B cell (primary cell): ENCODE measurements at regions of chr19 and their contacts with region 1.

Region 1: GRCh38 chr19:47013041-47013517 is 6.6 kb upstream of the NPAS1 start:
- DNase-seq: peak; percentile 71
- ATAC-seq: peak; percentile 94
- H3K4me3 ChIP-seq: no peak overlapping the region
- H3K4me3 Mint-ChIP-seq: no peak overlapping the region
- H3K27ac ChIP-seq: no peak overlapping the region
- H3K27ac Mint-ChIP-seq: peak overlapping the region; percentile 41
- H3K4me1 ChIP-seq: peaks cover 0 to 5% of the 10 kb centered on the region in 2 donors
- H3K4me1 Mint-ChIP-seq: peaks cover 4% of the 10 kb centered on the region
- H3K27me3 ChIP-seq: peaks cover 0 to 16% (median 2%) of the 10 kb centered on the region in 4 experiments
- H3K27me3 Mint-ChIP-seq: peaks cover 13% of the 10 kb centered on the region
- CTCF ChIP-seq: peak; percentile 99

Region 2: GRCh38 chr19:46860125-46860845 is 152.8 kb before region 1 on chr19:
- CTCF ChIA-PET with region 1: interaction called, 13 read pairs
- POLR2A ChIA-PET with region 1: no interaction called
- intact Hi-C with region 1: no loop called
- DNase-seq: peak; percentile 97
- ATAC-seq: peak; percentile 81
- H3K4me3 ChIP-seq: peak overlapping the region in 4 of 5 experiments; percentile 68 to 79 (median 77)
- H3K4me3 Mint-ChIP-seq: peak overlapping the region; percentile 91
- H3K27ac ChIP-seq: peak overlapping the region; percentile 71 to 77
- H3K27ac Mint-ChIP-seq: peak overlapping the region; percentile 95
- H3K4me1 ChIP-seq: peaks cover 40 to 41% of the 10 kb centered on the region in 2 donors
- H3K4me1 Mint-ChIP-seq: peaks cover 22% of the 10 kb centered on the region
- H3K27me3 ChIP-seq: no peaks in the 10 kb centered on the region
- H3K27me3 Mint-ChIP-seq: no peaks in the 10 kb centered on the region
- CTCF ChIP-seq: no peak

Region 3: GRCh38 chr19:47035127-47036096 is 22.3 kb after region 1 on chr19:
- CTCF ChIA-PET with region 1: interaction called, 27 read pairs
- POLR2A ChIA-PET with region 1: no interaction called
- intact Hi-C with region 1: loop called (anchors 1 kb)
- DNase-seq: peak; percentile 97
- ATAC-seq: peak; percentile 98
- H3K4me3 ChIP-seq: peak overlapping the region; percentile 36 to 69 (median 56)
- H3K4me3 Mint-ChIP-seq: peak overlapping the region; percentile 93
- H3K27ac ChIP-seq: no peak overlapping the region
- H3K27ac Mint-ChIP-seq: peak overlapping the region; percentile 80
- H3K4me1 ChIP-seq: peaks cover 18 to 19% of the 10 kb centered on the region in 2 donors
- H3K4me1 Mint-ChIP-seq: peaks cover 20% of the 10 kb centered on the region
- H3K27me3 ChIP-seq: peaks cover 0 to 20% (median 1%) of the 10 kb centered on the region in 4 experiments
- H3K27me3 Mint-ChIP-seq: peaks cover 13% of the 10 kb centered on the region
- CTCF ChIP-seq: peak; percentile 97

Region 4: GRCh38 chr19:47081111-47081510 is 68.0 kb after region 1 on chr19:
- CTCF ChIA-PET with region 1: interaction called, 13 read pairs
- POLR2A ChIA-PET with region 1: no interaction called
- intact Hi-C with region 1: no loop called
- DNase-seq: no peak
- ATAC-seq: no peak
- H3K4me3 ChIP-seq: no peak overlapping the region
- H3K4me3 Mint-ChIP-seq: no peak overlapping the region
- H3K27ac ChIP-seq: no peak overlapping the region
- H3K27ac Mint-ChIP-seq: no peak overlapping the region
- H3K4me1 ChIP-seq: peaks cover 0 to 9% of the 10 kb centered on the region in 2 donors
- H3K4me1 Mint-ChIP-seq: peaks cover 5% of the 10 kb centered on the region
- H3K27me3 ChIP-seq: no peaks in the 10 kb centered on the region
- H3K27me3 Mint-ChIP-seq: no peaks in the 10 kb centered on the region
- CTCF ChIP-seq: no peak

Region 5: GRCh38 chr19:47124937-47125668 is 112.0 kb after region 1 on chr19:
- CTCF ChIA-PET with region 1: interaction called, 37 read pairs
- POLR2A ChIA-PET with region 1: no interaction called
- intact Hi-C with region 1: loop called (anchors 1 kb)
- DNase-seq: peak; percentile 80
- ATAC-seq: peak; percentile 70
- H3K4me3 ChIP-seq: no peak overlapping the region
- H3K4me3 Mint-ChIP-seq: no peak overlapping the region
- H3K27ac ChIP-seq: no peak overlapping the region
- H3K27ac Mint-ChIP-seq: no peak overlapping the region
- H3K4me1 ChIP-seq: peaks cover 0 to 1% of the 10 kb centered on the region in 2 donors
- H3K4me1 Mint-ChIP-seq: peaks cover 2% of the 10 kb centered on the region
- H3K27me3 ChIP-seq: no peaks in the 10 kb centered on the region
- H3K27me3 Mint-ChIP-seq: peaks cover 3% of the 10 kb centered on the region
- CTCF ChIP-seq: peak; percentile 81

Region 6: DNA sequence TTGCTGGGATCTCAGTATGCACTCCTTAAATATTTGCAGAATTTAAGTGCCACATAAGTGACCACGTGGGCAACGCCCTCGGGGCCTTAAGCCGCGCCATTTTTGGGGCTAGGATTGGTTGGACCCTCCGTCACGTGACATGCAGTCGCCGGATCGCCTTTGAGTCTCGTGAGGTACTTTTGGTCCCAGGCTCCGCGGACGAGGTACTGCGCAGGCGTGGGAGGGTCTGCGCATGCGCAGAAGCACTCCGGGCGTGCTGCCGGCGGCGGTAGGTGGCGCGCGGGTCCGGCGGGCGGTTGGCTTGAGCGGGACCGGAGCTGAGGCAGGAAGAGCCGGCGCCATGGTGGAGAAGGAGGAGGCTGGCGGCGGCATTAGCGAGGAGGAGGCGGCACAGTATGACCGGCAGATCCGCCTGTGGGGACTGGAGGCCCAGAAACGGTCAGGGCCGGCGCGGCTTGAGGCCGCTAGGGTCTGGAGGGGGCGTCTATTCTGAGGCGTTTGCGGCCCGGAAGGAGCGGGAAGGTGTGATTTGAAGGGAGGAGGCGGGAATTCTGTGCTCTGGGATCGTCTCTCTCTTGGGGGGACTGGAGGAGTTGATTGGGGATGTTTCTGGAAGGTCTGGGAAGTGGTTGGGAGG is 117.6 kb after region 1 on chr19 and contains the start of gene SAE1:
- CTCF ChIA-PET with region 1: interaction called, 37 read pairs
- POLR2A ChIA-PET with region 1: no interaction called
- intact Hi-C with region 1: loop called (anchors 1 kb)
- DNase-seq: peak; percentile 97
- ATAC-seq: peak; percentile 89
- H3K4me3 ChIP-seq: peak within 1 kb of the TSS; percentile 50 to 98 (median 88)
- H3K4me3 Mint-ChIP-seq: peak within 1 kb of the TSS; percentile 97
- H3K27ac ChIP-seq: peak within 1 kb of the TSS; percentile 76 to 89
- H3K27ac Mint-ChIP-seq: peak within 1 kb of the TSS; percentile 98
- H3K4me1 ChIP-seq: peaks cover 0 to 21% of the 10 kb centered on the region in 2 donors
- H3K4me1 Mint-ChIP-seq: peaks cover 39% of the 10 kb centered on the region
- H3K27me3 ChIP-seq: no peaks in the 10 kb centered on the region
- H3K27me3 Mint-ChIP-seq: no peaks in the 10 kb centered on the region
- CTCF ChIP-seq: peak; percentile 65
- total RNA-seq, gene SAE1: 41.0 and 45.1 TPM in 2 replicates